ENCODE measurements at regions of chr6 and their contacts with region 1.

Region 1: GRCh38 chr6:43082806-43083655 is 6.9 kb downstream of the PTK7 start:
- DNase-seq: no peak
- ATAC-seq: no peak
- H3K4me3 ChIP-seq: no peak overlapping the region
- H3K4me3 Mint-ChIP-seq: no peak overlapping the region
- H3K27ac ChIP-seq: no peak overlapping the region
- H3K27ac Mint-ChIP-seq: no peak overlapping the region
- H3K4me1 ChIP-seq: no peaks in the 10 kb centered on the region
- H3K4me1 Mint-ChIP-seq: peaks cover 3% of the 10 kb centered on the region
- H3K27me3 ChIP-seq: no peaks in the 10 kb centered on the region
- H3K27me3 Mint-ChIP-seq: peaks cover 5% of the 10 kb centered on the region
- CTCF ChIP-seq: no peak

Region 2: GRCh38 chr6:43129434-43130194 is 46.6 kb after region 1 on chr6:
- CTCF ChIA-PET with region 1: no interaction called
- POLR2A ChIA-PET with region 1: no interaction called
- intact Hi-C with region 1: loop called in 1 of 2 experiments (anchors 5 kb)
- DNase-seq: peak in 1 of 9 experiments; percentile 34
- ATAC-seq: no peak
- H3K4me3 ChIP-seq: no peak overlapping the region
- H3K4me3 Mint-ChIP-seq: no peak overlapping the region
- H3K27ac ChIP-seq: no peak overlapping the region
- H3K27ac Mint-ChIP-seq: no peak overlapping the region
- H3K4me1 ChIP-seq: no peaks in the 10 kb centered on the region
- H3K4me1 Mint-ChIP-seq: no peaks in the 10 kb centered on the region
- H3K27me3 ChIP-seq: no peaks in the 10 kb centered on the region
- H3K27me3 Mint-ChIP-seq: no peaks in the 10 kb centered on the region
- CTCF ChIP-seq: no peak

Region 3: DNA sequence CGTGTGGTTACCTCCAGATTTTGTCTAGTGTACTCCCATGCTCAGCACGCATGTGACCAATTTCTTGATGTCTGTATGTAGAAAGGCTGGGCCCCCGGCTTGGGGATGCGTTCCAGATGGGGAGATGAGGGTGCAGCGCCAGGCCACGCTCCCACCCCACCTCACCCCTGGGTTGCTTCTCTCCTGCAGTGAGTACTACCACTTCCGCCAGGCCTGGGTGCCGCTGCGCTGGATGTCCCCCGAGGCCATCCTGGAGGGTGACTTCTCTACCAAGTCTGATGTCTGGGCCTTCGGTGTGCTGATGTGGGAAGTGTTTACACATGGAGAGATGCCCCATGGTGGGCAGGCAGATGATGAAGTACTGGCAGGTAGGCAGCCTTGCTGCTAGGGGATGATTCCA is 76.6 kb after region 1 on chr6:
- CTCF ChIA-PET with region 1: no interaction called
- POLR2A ChIA-PET with region 1: no interaction called
- intact Hi-C with region 1: no loop called
- DNase-seq: no peak
- ATAC-seq: no peak
- H3K4me3 ChIP-seq: no peak overlapping the region
- H3K4me3 Mint-ChIP-seq: no peak overlapping the region
- H3K27ac ChIP-seq: no peak overlapping the region
- H3K27ac Mint-ChIP-seq: no peak overlapping the region
- H3K4me1 ChIP-seq: no peaks in the 10 kb centered on the region
- H3K4me1 Mint-ChIP-seq: no peaks in the 10 kb centered on the region
- H3K27me3 ChIP-seq: no peaks in the 10 kb centered on the region
- H3K27me3 Mint-ChIP-seq: no peaks in the 10 kb centered on the region
- CTCF ChIP-seq: no peak

Measured in CD8-positive, alpha-beta T cell (primary cell).